SK-N-SH (cell line): ENCODE measurements at regions of chr6 and their contacts with region 1.

Region 1: GRCh38 chr6:70221025-70221714 is 81.7 kb downstream of the COL9A1 start:
- DNase-seq: peak; percentile 68
- H3K4me3 ChIP-seq: no peak overlapping the region
- H3K27ac ChIP-seq: no peak overlapping the region
- H3K4me1 ChIP-seq: no peaks in the 10 kb centered on the region; a peak in 2 of 4 replicates
- H3K27me3 ChIP-seq: peaks cover 8% of the 10 kb centered on the region; the same call in 1 of the 2 replicates
- CTCF ChIP-seq: peak; percentile 68
- EP300 ChIP-seq: no peak
- RAD21 ChIP-seq: peak; percentile 90

Region 2: GRCh38 chr6:70186461-70186860 is 34.7 kb before region 1 on chr6:
- CTCF ChIA-PET with region 1: no interaction called
- POLR2A ChIA-PET with region 1: no interaction called
- DNase-seq: no peak
- H3K4me3 ChIP-seq: no peak overlapping the region
- H3K27ac ChIP-seq: no peak overlapping the region
- H3K4me1 ChIP-seq: no peaks in the 10 kb centered on the region
- H3K27me3 ChIP-seq: no peaks in the 10 kb centered on the region
- CTCF ChIP-seq: no peak
- EP300 ChIP-seq: no peak
- RAD21 ChIP-seq: no peak

Region 3: DNA sequence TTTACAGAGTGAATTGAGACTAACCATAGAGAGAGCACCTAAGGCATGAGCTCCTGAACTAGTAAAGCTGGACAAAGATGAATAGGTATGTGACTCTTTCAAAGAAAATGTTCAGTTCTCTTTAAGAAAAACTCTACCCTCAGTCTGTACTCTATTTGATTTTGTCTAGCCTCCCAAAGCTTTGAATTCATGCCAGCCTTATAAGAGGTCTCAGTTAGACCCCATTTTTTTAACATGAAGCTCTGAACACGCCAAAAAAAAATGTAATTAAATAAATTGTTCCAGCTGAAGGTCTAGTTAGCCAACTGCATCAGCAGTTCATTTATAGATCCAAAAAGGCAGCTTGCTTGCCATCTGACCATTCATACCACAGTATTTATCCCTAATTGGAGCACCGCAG is 10.1 kb after region 1 on chr6:
- CTCF ChIA-PET with region 1: interaction called, 70 read pairs
- POLR2A ChIA-PET with region 1: no interaction called
- DNase-seq: no peak
- H3K4me3 ChIP-seq: no peak overlapping the region
- H3K27ac ChIP-seq: no peak overlapping the region
- H3K4me1 ChIP-seq: no peaks in the 10 kb centered on the region
- H3K27me3 ChIP-seq: 0 out of 2 replicates have a peak, but pooled peaks cover 6% of the 10 kb centered on the region
- CTCF ChIP-seq: no peak
- EP300 ChIP-seq: no peak
- RAD21 ChIP-seq: no peak

Region 4: GRCh38 chr6:70253923-70254322 is 32.8 kb after region 1 on chr6:
- CTCF ChIA-PET with region 1: interaction called, 14 read pairs
- POLR2A ChIA-PET with region 1: no interaction called
- DNase-seq: no peak
- H3K4me3 ChIP-seq: no peak overlapping the region
- H3K27ac ChIP-seq: no peak overlapping the region
- H3K4me1 ChIP-seq: no peaks in the 10 kb centered on the region
- H3K27me3 ChIP-seq: no peaks in the 10 kb centered on the region
- CTCF ChIP-seq: no peak
- EP300 ChIP-seq: no peak
- RAD21 ChIP-seq: no peak

Region 5: GRCh38 chr6:70299456-70299855 is 78.3 kb after region 1 on chr6:
- CTCF ChIA-PET with region 1: interaction called, 34 read pairs
- POLR2A ChIA-PET with region 1: no interaction called
- DNase-seq: no peak
- H3K4me3 ChIP-seq: no peak overlapping the region
- H3K27ac ChIP-seq: no peak overlapping the region
- H3K4me1 ChIP-seq: no peaks in the 10 kb centered on the region
- H3K27me3 ChIP-seq: no peaks in the 10 kb centered on the region; the same call in 1 of the 2 replicates
- CTCF ChIP-seq: no peak
- EP300 ChIP-seq: no peak
- RAD21 ChIP-seq: no peak

Region 6: GRCh38 chr6:70363741-70364493 is 142.7 kb after region 1 on chr6:
- CTCF ChIA-PET with region 1: interaction called, 104 read pairs
- POLR2A ChIA-PET with region 1: no interaction called
- DNase-seq: no peak
- H3K4me3 ChIP-seq: no peak overlapping the region
- H3K27ac ChIP-seq: no peak overlapping the region
- H3K4me1 ChIP-seq: no peaks in the 10 kb centered on the region
- H3K27me3 ChIP-seq: peaks cover 6% of the 10 kb centered on the region; the same call in 1 of the 2 replicates
- CTCF ChIP-seq: no peak
- EP300 ChIP-seq: no peak
- RAD21 ChIP-seq: no peak

Region 7: GRCh38 chr6:70955441-70956190 is 734.4 kb after region 1 on chr6:
- CTCF ChIA-PET with region 1: interaction called, 20 read pairs
- POLR2A ChIA-PET with region 1: no interaction called
- DNase-seq: peak; percentile 91
- H3K4me3 ChIP-seq: peak overlapping the region; percentile 52 to 67
- H3K27ac ChIP-seq: no peak overlapping the region
- H3K4me1 ChIP-seq: peaks cover 0 to 14% of the 10 kb centered on the region in 2 experiments; a peak in 1 of 4 replicates
- H3K27me3 ChIP-seq: peaks cover 36% of the 10 kb centered on the region
- CTCF ChIP-seq: peak; percentile 75
- EP300 ChIP-seq: no peak
- RAD21 ChIP-seq: peak; percentile 66